CD14-positive monocyte (primary cell): ENCODE measurements at regions of chr3 and their contacts with region 1.

Region 1: DNA sequence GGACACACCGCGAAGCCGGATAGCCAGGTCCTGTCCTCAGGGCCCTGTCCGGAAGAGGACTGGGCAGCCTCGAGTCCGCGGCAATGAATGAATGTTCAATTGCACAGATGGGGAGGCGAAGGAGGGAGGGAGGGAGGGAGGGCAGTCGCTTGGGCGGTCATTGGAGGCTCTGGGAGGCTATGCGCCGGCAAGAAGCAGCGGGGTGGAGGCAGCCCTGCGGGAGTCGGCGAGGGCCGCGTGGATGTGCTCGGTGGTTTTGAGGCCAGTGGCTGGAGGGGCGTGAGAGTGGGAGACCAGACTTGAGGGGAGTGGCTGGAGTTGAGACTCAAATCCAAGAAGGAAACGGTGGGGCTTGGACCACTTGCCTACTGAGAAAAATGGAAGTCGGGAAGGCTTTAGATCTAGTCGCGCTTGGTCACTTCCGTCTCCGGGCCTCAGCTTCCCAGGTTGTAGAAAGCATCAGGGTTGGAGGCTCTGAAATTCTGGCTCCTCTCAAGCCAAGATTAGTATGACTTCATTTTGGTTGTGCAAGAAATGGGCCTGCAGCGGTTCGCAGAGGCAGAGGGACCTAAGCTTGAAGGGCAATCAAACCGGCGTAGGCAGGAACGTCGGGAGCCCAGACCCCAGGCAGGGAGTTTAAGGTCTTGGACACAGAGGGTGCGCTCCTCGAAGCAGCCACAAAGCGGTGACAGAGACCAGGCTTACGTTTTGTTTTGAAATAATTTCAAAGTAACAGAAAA is 21.1 kb upstream of the PLXND1 start:
- DNase-seq: peak; percentile 74 to 89 (median 84)
- H3K4me3 ChIP-seq: peak overlapping the region; percentile 28 to 77 (median 54)
- H3K4me3 Mint-ChIP-seq: peak overlapping the region; percentile 86 to 94
- H3K27ac ChIP-seq: peak overlapping the region; percentile 93 to 94
- H3K27ac Mint-ChIP-seq: peak overlapping the region; percentile 93 to 99 (median 97)
- H3K4me1 ChIP-seq: peaks cover 62 to 66% of the 10 kb centered on the region in 2 donors
- H3K4me1 Mint-ChIP-seq: peaks cover 51% of the 10 kb centered on the region
- H3K27me3 ChIP-seq: no peaks in the 10 kb centered on the region
- H3K27me3 Mint-ChIP-seq: peaks cover 0 to 2% (median 0%) of the 10 kb centered on the region in 3 donors
- CTCF ChIP-seq: peak; percentile 77

Region 2: DNA sequence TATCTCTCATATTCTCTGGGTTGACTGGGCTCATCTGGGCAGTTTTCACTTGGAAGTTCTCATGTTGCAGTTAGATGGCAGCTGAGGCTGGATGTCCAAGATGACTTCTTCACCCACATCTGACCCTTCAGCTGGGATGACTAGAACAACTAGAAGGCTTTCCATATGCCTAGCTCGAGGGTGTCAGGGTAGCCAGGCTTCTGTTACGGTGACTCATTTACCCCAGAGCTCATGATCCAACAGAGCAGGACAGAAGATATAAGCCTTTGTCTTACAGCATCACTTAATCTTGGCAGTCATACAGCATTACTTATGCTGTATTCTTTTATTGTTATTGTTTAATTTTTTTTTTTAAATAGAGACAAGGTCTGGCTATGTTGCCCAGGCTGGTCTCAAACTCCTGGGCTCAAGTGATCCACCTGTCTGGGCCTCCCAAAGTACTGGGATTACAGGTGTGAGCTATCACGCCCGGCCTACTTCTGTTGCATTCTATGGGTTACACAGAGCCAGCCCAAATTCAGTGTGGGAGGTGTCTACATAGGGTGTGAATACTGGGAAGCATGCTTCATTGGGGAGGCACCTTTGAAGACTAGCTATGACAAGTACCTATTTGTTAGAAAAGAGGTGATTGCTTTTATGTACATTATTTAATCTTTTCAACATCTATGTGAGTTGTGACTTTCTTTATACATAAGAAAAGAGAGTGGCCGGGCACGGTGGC is 338.2 kb before region 1 on chr3:
- intact Hi-C with region 1: no loop called
- DNase-seq: no peak
- H3K4me3 ChIP-seq: no peak overlapping the region
- H3K4me3 Mint-ChIP-seq: no peak overlapping the region
- H3K27ac ChIP-seq: no peak overlapping the region
- H3K27ac Mint-ChIP-seq: no peak overlapping the region
- H3K4me1 ChIP-seq: no peaks in the 10 kb centered on the region
- H3K4me1 Mint-ChIP-seq: no peaks in the 10 kb centered on the region
- H3K27me3 ChIP-seq: no peaks in the 10 kb centered on the region
- H3K27me3 Mint-ChIP-seq: no peaks in the 10 kb centered on the region
- CTCF ChIP-seq: no peak

Region 3: GRCh38 chr3:129490242-129491045 is 137.2 kb before region 1 on chr3:
- intact Hi-C with region 1: loop called (anchors 5 to 10 kb)
- DNase-seq: peak; percentile 94 to 98 (median 96)
- H3K4me3 ChIP-seq: no peak overlapping the region
- H3K4me3 Mint-ChIP-seq: peak overlapping the region in 1 of 2 donors; percentile 26
- H3K27ac ChIP-seq: peak overlapping the region; percentile 89
- H3K27ac Mint-ChIP-seq: peak overlapping the region; percentile 87 to 98 (median 94)
- H3K4me1 ChIP-seq: peaks cover 50 to 55% of the 10 kb centered on the region in 2 donors
- H3K4me1 Mint-ChIP-seq: peaks cover 53% of the 10 kb centered on the region
- H3K27me3 ChIP-seq: no peaks in the 10 kb centered on the region
- H3K27me3 Mint-ChIP-seq: peaks cover 0 to 1% (median 0%) of the 10 kb centered on the region in 3 donors
- CTCF ChIP-seq: peak; percentile 91

Region 4: DNA sequence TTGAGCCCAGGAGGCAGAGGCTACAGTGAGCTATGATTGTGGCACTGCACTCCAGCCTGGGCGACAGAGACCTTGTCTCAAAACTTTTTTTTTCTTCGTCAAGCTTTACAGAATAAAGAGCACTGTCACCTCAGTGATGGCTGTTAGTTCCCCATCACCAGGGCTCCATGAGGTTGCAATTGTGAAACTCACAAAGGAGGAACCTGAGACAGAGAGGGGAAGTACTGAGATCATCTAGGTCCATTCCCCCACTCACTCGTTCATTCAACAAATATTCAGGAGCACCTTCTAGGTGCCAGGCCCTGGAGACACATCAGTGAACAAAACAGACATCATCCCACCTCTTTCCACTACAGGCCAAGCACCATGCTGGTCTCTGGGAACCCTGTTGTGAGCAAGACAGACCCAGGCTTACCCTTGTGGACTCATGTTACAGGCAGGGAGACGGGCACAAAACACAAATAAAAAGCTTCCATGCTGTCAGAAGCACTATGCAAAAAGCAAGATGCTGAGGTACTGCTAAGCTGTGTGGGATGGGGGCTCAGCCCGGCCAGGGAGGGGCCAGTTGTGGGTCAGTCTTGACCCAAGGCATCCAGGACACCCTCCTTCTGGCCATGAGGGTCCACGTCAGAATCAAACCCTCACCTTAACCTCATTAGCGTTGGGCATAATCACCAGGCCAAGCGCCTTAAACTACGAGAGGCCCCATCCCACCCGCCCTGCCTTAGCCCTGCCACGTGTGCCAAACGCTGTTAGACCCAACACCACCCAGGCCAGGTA is 101.3 kb before region 1 on chr3:
- intact Hi-C with region 1: no loop called
- DNase-seq: peak; percentile 94 to 97 (median 97)
- H3K4me3 ChIP-seq: no peak overlapping the region
- H3K4me3 Mint-ChIP-seq: peak overlapping the region in 1 of 2 donors; percentile 55
- H3K27ac ChIP-seq: peak overlapping the region; percentile 97 to 98
- H3K27ac Mint-ChIP-seq: peak overlapping the region; percentile 96 to 99 (median 99)
- H3K4me1 ChIP-seq: peaks cover 47 to 58% of the 10 kb centered on the region in 2 donors
- H3K4me1 Mint-ChIP-seq: peaks cover 48% of the 10 kb centered on the region
- H3K27me3 ChIP-seq: no peaks in the 10 kb centered on the region
- H3K27me3 Mint-ChIP-seq: peaks cover 0 to 6% (median 3%) of the 10 kb centered on the region in 3 donors
- CTCF ChIP-seq: no peak

Region 5: GRCh38 chr3:129596194-129597086 is 31.2 kb before region 1 on chr3:
- intact Hi-C with region 1: loop called in 1 of 2 experiments (anchors 5 kb)
- DNase-seq: peak; percentile 67 to 78 (median 69)
- H3K4me3 ChIP-seq: peak overlapping the region in 1 of 3 experiments; percentile 41
- H3K4me3 Mint-ChIP-seq: peak overlapping the region; percentile 50 to 71
- H3K27ac ChIP-seq: peak overlapping the region; percentile 60 to 90
- H3K27ac Mint-ChIP-seq: peak overlapping the region; percentile 60 to 85 (median 83)
- H3K4me1 ChIP-seq: peaks cover 97 to 100% of the 10 kb centered on the region in 2 donors
- H3K4me1 Mint-ChIP-seq: peaks cover 93% of the 10 kb centered on the region
- H3K27me3 ChIP-seq: no peaks in the 10 kb centered on the region
- H3K27me3 Mint-ChIP-seq: peaks cover 0 to 2% (median 0%) of the 10 kb centered on the region in 3 donors
- CTCF ChIP-seq: no peak

Region 6: GRCh38 chr3:129824926-129825541 is 197.4 kb after region 1 on chr3:
- intact Hi-C with region 1: loop called in 1 of 2 experiments (anchors 5 kb)
- DNase-seq: peak; percentile 33 to 68 (median 55)
- H3K4me3 ChIP-seq: no peak overlapping the region
- H3K4me3 Mint-ChIP-seq: no peak overlapping the region
- H3K27ac ChIP-seq: no peak overlapping the region
- H3K27ac Mint-ChIP-seq: peak overlapping the region in 5 of 7 donors; percentile 13 to 73 (median 16)
- H3K4me1 ChIP-seq: peaks cover 48 to 54% of the 10 kb centered on the region in 2 donors
- H3K4me1 Mint-ChIP-seq: peaks cover 51% of the 10 kb centered on the region
- H3K27me3 ChIP-seq: no peaks in the 10 kb centered on the region
- H3K27me3 Mint-ChIP-seq: peaks cover 0 to 2% (median 0%) of the 10 kb centered on the region in 3 donors
- CTCF ChIP-seq: peak; percentile 89

Region 7: GRCh38 chr3:129911261-129911861 is 283.8 kb after region 1 on chr3:
- intact Hi-C with region 1: no loop called
- DNase-seq: peak; percentile 85 to 89 (median 88)
- H3K4me3 ChIP-seq: peak overlapping the region in 1 of 3 experiments; percentile 30
- H3K4me3 Mint-ChIP-seq: peak overlapping the region in 1 of 2 donors; percentile 30
- H3K27ac ChIP-seq: peak overlapping the region; percentile 67 to 80
- H3K27ac Mint-ChIP-seq: peak overlapping the region; percentile 79 to 90 (median 88)
- H3K4me1 ChIP-seq: peaks cover 19 to 22% of the 10 kb centered on the region in 2 donors
- H3K4me1 Mint-ChIP-seq: peaks cover 15% of the 10 kb centered on the region
- H3K27me3 ChIP-seq: no peaks in the 10 kb centered on the region
- H3K27me3 Mint-ChIP-seq: peaks cover 0 to 7% (median 2%) of the 10 kb centered on the region in 3 donors
- CTCF ChIP-seq: no peak

Region 8: GRCh38 chr3:129934234-129935123 is 306.9 kb after region 1 on chr3:
- intact Hi-C with region 1: loop called (anchors 2 to 5 kb)
- DNase-seq: peak in 2 of 3 donors; percentile 41 to 44
- H3K4me3 ChIP-seq: peak overlapping the region in 1 of 3 experiments; percentile 35
- H3K4me3 Mint-ChIP-seq: peak overlapping the region; percentile 48 to 67
- H3K27ac ChIP-seq: no peak overlapping the region
- H3K27ac Mint-ChIP-seq: peak overlapping the region in 2 of 7 donors; percentile 7 to 55
- H3K4me1 ChIP-seq: peaks cover 8 to 11% of the 10 kb centered on the region in 2 donors
- H3K4me1 Mint-ChIP-seq: peaks cover 12% of the 10 kb centered on the region
- H3K27me3 ChIP-seq: no peaks in the 10 kb centered on the region
- H3K27me3 Mint-ChIP-seq: peaks cover 0 to 8% (median 4%) of the 10 kb centered on the region in 3 donors
- CTCF ChIP-seq: peak; percentile 96

Region 9: DNA sequence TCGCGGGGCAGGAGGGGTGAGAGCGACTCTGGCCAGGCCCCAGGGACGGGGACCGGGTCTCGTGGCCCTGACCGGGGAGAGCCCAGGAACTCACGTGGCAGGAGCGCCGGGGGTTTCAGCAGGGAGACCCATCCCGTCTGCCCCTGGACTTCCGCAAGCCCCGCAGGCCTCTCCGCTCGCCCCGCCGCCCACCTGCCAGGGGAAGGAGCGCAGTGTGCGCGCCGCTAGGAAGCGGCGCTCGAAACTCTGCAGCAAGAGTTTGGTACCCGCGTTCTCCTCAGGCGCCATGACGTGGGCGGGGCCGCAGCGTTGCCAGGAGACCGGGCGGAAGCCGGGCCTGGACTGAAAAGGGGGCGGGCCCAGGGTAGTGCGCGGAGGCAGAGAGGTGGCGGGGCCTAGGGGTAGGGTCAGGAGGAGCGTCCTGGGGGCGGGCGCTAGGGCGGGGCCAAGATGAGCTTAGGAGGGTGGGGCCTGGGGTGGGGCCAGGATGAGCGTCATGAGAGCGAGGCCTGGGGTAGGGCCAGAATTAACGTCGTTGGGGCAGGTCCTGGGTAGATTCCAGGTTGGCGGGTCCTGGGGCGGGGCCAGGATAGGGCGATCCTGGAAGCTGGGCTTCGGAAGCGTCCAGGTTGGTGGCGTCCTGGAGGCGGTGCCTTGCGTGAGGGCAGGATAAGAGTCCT is 483.7 kb after region 1 on chr3:
- intact Hi-C with region 1: loop called in 1 of 2 experiments (anchors 5 kb)
- DNase-seq: peak; percentile 96 to 99 (median 98)
- H3K4me3 ChIP-seq: peak overlapping the region; percentile 65 to 81 (median 71)
- H3K4me3 Mint-ChIP-seq: peak overlapping the region; percentile 85 to 93
- H3K27ac ChIP-seq: peak overlapping the region; percentile 80 to 87
- H3K27ac Mint-ChIP-seq: peak overlapping the region; percentile 98 to 100 (median 99)
- H3K4me1 ChIP-seq: peaks cover 13% of the 10 kb centered on the region in 2 donors
- H3K4me1 Mint-ChIP-seq: peaks cover 22% of the 10 kb centered on the region
- H3K27me3 ChIP-seq: no peaks in the 10 kb centered on the region
- H3K27me3 Mint-ChIP-seq: peaks cover 3 to 11% (median 10%) of the 10 kb centered on the region in 3 donors
- CTCF ChIP-seq: no peak